ENCODE measurements at regions of chr1 and their contacts with region 1.

Region 1: DNA sequence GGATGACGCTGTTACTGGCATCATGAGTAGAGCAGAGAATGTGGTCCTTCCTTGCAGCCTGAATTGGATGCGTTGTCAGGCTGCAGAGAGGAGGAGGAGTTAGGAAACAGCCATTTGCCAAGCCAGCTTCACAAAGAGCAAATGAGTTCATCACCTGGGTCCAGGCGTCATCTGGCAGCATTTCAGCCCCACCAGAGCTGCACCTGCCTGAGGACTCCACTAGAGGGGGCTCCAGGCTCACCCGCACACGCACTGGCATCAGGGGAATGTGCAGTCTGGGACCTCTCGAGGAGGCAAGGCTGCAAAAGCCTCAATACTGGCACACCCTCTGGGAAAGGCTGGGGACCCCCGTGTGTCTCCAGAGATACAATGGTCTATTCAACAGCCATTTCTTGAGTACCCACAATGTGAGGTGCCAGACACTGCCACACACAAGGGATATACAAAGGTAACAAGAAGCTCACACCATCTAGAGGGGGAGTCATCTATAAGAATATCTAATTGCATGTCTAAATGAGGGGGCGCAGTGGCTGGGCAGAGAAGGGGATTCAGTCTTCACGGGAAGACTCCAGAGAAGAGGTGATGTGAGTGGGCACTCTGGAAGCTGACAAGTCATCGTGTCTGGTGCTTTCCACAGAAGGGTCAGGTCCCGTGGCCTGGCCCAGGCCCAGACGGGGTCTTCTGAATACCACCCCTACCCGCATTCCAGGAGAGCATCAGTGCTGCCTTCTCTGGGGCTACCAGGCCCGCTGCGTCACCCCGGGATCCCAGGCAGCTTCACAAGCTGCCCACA is 53.5 kb upstream of the CNTN2 start:
- DNase-seq: peak; percentile 76
- H3K4me3 ChIP-seq: no peak overlapping the region
- H3K27ac ChIP-seq: no peak overlapping the region
- H3K4me1 ChIP-seq: no peaks in the 10 kb centered on the region
- H3K27me3 ChIP-seq: no peaks in the 10 kb centered on the region
- CTCF ChIP-seq: peak; percentile 85 to 90 (median 89)
- POLR2A ChIP-seq: no peak

Region 2: DNA sequence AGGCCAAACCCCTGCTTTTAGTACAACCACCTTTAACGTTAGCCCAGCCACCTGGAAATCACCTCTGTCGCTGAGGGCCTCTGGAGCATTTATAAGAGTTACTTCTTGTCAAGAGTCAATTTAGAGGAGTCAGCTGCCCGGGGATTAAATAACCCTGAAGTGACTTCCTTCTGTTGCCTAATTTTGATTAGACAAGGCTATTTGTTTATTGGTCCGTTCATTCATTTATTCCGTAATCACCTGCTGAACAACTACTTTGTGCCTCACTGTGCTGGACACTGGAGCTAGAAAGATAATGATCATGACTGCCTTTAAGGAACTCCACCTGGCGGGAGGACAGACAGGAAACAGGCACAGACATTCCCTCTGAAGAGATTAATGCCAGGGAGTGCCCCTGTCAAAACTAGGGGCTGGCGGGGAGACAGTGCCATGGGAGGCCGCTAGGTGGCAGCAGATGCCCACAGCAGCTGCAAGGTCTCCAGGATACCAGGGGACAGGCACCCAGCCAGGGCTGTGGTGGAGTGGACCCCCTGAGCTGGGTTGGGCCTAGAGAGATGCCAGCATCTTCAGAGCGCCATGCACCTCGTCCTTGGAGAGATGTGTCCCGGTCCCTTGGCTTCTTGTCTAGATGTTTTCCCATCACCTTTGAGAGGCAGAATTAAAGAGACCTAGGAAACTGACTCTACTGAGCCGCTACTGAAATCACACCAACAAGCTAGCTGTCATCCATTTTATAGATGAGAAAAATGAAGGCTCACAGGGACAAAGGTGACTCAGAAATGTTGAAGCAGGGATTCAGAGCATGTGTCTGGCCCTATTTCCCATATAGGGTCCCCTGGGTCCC is 827.0 kb before region 1 on chr1:
- intact Hi-C with region 1: no loop called
- DNase-seq: peak; percentile 82
- H3K4me3 ChIP-seq: no peak overlapping the region
- H3K27ac ChIP-seq: no peak overlapping the region
- H3K4me1 ChIP-seq: no peaks in the 10 kb centered on the region
- H3K27me3 ChIP-seq: no peaks in the 10 kb centered on the region
- CTCF ChIP-seq: peak; percentile 82 to 97 (median 85)
- POLR2A ChIP-seq: no peak

Region 3: GRCh38 chr1:204924013-204924967 is 65.2 kb before region 1 on chr1:
- intact Hi-C with region 1: no loop called
- DNase-seq: no peak
- H3K4me3 ChIP-seq: no peak overlapping the region
- H3K27ac ChIP-seq: no peak overlapping the region
- H3K4me1 ChIP-seq: peaks cover 9% of the 10 kb centered on the region
- H3K27me3 ChIP-seq: no peaks in the 10 kb centered on the region
- CTCF ChIP-seq: no peak
- POLR2A ChIP-seq: no peak

Region 4: DNA sequence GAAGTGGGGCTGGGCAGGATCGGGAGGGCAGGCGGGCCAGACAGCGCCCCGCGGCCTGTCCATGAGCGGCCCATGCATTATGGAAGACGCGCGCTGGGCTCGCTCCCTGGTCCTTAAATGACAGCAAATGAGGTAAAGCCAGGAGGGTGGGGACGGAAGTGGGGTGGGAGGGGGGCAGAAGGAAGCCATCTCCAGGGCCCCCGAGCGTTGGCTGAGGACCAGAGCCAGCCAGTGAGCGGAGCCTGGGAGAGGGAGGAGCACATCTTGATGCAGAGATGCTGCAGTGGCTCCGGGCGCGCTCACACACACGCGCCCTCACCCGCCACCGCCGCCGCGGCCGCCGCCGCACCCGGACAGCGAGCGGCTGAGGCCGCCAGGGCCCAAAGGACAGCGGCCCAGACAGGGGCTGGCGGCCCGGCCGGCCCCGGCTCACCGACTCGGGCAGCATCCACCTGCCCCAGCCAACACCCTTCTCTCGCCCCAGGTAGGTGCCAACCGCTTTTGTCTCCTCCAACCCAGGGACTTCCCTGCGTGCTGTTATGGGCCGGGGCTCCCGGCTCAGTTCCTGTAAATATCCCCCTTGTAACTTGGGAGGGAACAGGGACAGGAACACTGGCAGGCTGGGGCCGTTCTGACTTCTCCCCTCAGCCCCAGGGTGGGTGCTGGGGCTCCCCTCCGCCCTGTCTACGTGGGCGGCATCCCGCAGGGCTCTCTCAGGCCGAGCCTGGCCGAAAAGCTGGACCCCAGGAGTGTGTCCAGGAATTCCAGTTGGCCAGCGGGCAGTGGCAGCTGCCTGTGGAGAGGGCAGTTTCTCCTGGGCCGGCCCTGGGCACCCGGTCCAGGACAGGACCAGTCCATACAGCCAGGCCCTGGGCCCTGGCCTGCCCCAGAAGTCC is 53.7 kb after region 1 on chr1 and contains the start of gene CNTN2:
- intact Hi-C with region 1: no loop called
- DNase-seq: no peak
- H3K4me3 ChIP-seq: peak within 1 kb of the TSS in 1 of 2 donors; percentile 3
- H3K27ac ChIP-seq: no peak within 1 kb of the TSS
- H3K4me1 ChIP-seq: no peaks in the 10 kb centered on the region
- H3K27me3 ChIP-seq: no peaks in the 10 kb centered on the region
- CTCF ChIP-seq: no peak
- POLR2A ChIP-seq: no peak
- total RNA-seq, gene CNTN2: 16.4 to 17.2 TPM

Region 5: GRCh38 chr1:205056188-205056611 is 66.7 kb after region 1 on chr1:
- intact Hi-C with region 1: loop called (anchors 5 kb)
- DNase-seq: no peak
- H3K4me3 ChIP-seq: no peak overlapping the region
- H3K27ac ChIP-seq: no peak overlapping the region
- H3K4me1 ChIP-seq: no peaks in the 10 kb centered on the region
- H3K27me3 ChIP-seq: no peaks in the 10 kb centered on the region
- CTCF ChIP-seq: no peak
- POLR2A ChIP-seq: no peak

Region 6: DNA sequence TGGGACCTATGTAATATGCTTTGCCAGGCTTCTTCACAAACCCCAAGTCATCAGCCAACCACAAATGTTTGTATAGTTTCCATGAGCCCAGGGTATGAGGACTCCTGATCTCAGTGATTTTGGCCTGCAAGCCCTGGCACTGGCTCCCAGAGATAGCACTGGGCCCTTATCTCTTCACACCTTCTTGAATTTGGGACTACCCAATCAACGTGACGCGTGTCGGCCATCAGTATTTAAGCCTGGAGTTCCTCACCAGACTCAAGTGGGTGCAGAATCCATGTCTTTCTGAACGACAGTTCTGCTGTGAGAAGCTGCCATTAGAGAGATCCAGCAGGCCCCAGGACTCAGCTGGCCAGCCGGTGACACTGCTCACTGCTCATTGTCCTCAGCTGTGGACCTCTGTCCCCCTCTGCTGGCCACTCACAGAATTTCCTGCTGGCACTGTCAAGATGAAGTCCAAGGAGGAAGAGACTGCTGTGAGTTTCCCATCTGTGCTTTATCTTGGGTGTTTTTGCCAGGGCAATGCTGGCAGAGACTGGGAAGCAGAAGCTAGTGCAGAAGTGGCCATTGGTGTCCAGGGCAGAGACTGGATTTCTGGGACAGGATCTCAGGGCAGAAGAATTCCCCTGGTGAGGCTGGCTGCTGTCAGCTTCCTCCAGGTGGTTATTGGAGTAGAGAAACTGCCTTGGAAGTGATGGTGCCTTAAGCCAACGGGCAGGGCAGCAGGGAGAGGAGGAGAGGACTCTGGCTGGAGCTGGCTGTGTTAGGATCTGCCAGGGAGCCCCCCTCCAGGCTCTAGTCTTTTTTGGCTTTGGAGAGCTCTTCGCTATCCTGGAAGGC is 266.7 kb after region 1 on chr1:
- intact Hi-C with region 1: loop called (anchors 10 kb)
- DNase-seq: peak; percentile 96
- H3K4me3 ChIP-seq: no peak overlapping the region
- H3K27ac ChIP-seq: no peak overlapping the region
- H3K4me1 ChIP-seq: peaks cover 14% of the 10 kb centered on the region
- H3K27me3 ChIP-seq: no peaks in the 10 kb centered on the region
- CTCF ChIP-seq: peak; percentile 90 to 97 (median 94)
- POLR2A ChIP-seq: no peak

Region 7: GRCh38 chr1:205396967-205397616 is 407.6 kb after region 1 on chr1:
- intact Hi-C with region 1: no loop called
- DNase-seq: peak; percentile 60
- H3K4me3 ChIP-seq: no peak overlapping the region
- H3K27ac ChIP-seq: no peak overlapping the region
- H3K4me1 ChIP-seq: no peaks in the 10 kb centered on the region
- H3K27me3 ChIP-seq: no peaks in the 10 kb centered on the region
- CTCF ChIP-seq: peak; percentile 66 to 82 (median 72)
- POLR2A ChIP-seq: no peak